Heart right ventricle (tissue), 16 donors: ENCODE measurements at regions of chr12 and their contacts with region 1.

Region 1: GRCh38 chr12:66301944-66302826 is at the start of gene HELB:
- DNase-seq: peak; percentile 98
- ATAC-seq: peak; percentile 98 to 100 (median 100)
- H3K4me3 ChIP-seq: peak within 1 kb of the TSS; percentile 46 to 79 (median 70)
- H3K27ac ChIP-seq: peak within 1 kb of the TSS in 9 of 10 donors; percentile 43 to 91 (median 85)
- H3K4me1 ChIP-seq: peaks cover 0 to 40% (median 14%) of the 10 kb centered on the region in 9 donors
- H3K27me3 ChIP-seq: peaks cover 0 to 7% (median 0%) of the 10 kb centered on the region in 7 donors
- CTCF ChIP-seq: no peak
- total RNA-seq, gene HELB: 0.47 to 3.6 (median 1.2) TPM

Region 2: DNA sequence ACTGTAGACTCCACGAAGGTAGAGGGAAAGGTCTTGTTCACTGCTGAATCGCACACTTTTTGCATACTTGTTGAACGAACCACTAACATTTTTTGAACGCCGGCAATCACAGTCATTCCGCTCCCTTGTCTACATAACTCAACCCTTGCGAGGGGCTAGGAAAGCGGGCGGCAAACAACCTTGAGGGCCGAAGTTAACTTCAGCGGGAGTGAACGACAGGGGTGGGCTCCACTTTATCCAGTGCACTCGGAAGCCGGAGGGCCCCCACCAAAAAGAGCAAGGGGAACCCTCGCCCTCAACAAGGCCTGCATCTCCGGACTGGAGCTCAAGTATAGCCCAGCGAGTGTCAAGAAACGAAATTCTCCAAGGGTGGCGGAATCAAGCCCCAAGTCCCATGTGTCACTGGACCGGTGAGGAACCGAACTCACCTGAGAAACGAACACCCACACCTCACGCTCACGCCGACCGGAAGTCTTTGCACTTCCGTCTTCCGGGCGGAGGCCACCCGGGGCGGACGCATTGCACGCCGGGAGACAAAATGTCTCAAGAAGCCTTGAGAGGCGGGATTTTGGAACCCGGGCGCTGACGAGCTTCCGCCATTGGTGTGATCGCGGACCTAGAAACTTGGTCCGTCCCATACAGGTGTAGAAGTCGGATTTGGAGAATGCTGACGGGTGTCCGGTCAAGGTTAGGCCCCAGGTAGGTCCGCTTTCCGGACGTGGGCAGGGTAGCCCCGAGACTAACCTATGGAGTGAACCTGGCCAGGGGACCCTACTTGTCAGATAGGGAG is 171.7 kb before region 1 on chr12 and contains the start of gene LLPH:
- intact Hi-C with region 1: loop called in 1 of 10 experiments (anchors 5 kb)
- DNase-seq: peak; percentile 85 to 89
- ATAC-seq: peak; percentile 92 to 97 (median 96)
- H3K4me3 ChIP-seq: peak within 1 kb of the TSS; percentile 51 to 95 (median 86)
- H3K27ac ChIP-seq: peak within 1 kb of the TSS in 9 of 10 donors; percentile 27 to 91 (median 83)
- H3K4me1 ChIP-seq: peaks cover 0 to 51% (median 29%) of the 10 kb centered on the region in 9 donors
- H3K27me3 ChIP-seq: no peaks in the 10 kb centered on the region
- CTCF ChIP-seq: no peak
- total RNA-seq, gene LLPH: 16.1 to 23.2 (median 18.9) TPM

Region 3: DNA sequence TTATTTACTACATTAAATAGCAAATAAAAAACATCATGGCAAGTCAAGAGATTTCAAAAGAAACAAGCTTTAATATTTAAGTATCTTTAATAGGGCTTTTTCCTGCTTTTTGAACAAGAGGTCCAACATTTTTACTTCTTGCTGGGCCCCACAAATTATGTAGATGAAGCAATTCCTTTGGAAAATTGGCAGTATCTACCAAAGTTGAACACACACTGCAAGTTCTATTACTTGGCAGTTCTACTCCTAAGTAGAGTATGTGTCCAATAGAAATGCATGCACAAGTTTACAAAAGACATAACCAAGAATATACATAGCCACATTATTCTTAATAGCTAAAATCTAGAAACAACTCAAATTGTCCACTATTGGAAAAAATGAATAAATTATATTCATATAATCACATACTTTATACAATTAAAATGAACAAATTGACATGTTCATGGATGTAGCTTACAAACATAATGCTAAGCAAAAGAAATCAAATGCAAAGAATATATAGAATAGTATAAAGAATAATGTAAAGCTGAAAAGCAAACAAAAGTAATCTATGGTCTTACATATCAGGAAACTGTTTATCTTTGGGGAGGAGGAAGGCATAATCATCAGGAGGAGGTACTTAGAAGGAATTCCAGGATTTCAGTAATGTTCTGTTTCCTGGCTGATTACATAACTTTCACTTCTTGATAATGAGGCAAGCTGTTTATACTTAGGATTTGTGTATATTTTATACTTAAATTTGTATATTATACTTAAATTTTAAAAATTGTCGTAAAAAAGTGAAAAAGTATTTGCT is 125.9 kb before region 1 on chr12:
- intact Hi-C with region 1: no loop called
- DNase-seq: no peak
- ATAC-seq: no peak
- H3K4me3 ChIP-seq: no peak overlapping the region
- H3K27ac ChIP-seq: peak overlapping the region in 1 of 10 donors; percentile 2
- H3K4me1 ChIP-seq: peaks cover 0 to 24% (median 0%) of the 10 kb centered on the region in 9 donors
- H3K27me3 ChIP-seq: peaks cover 0 to 4% (median 0%) of the 10 kb centered on the region in 7 donors
- CTCF ChIP-seq: no peak

Region 4: GRCh38 chr12:66241061-66242043 is 60.8 kb before region 1 on chr12:
- intact Hi-C with region 1: loop called in 1 of 10 experiments (anchors 2 kb)
- DNase-seq: no peak
- ATAC-seq: peak in 1 of 8 donors; percentile 75
- H3K4me3 ChIP-seq: no peak overlapping the region
- H3K27ac ChIP-seq: peak overlapping the region in 1 of 10 donors; percentile 79
- H3K4me1 ChIP-seq: peaks cover 0 to 64% (median 0%) of the 10 kb centered on the region in 9 donors
- H3K27me3 ChIP-seq: no peaks in the 10 kb centered on the region
- CTCF ChIP-seq: no peak